ENCODE measurements at regions of chr1 and their contacts with region 1.

Region 1: GRCh38 chr1:31891280-31891679 is 46.9 kb downstream of the PTP4A2 start:
- DNase-seq: peak; percentile 81
- H3K4me3 Mint-ChIP-seq: no peak overlapping the region
- H3K27ac Mint-ChIP-seq: peak overlapping the region; percentile 90
- H3K4me1 Mint-ChIP-seq: peaks cover 38% of the 10 kb centered on the region
- H3K27me3 Mint-ChIP-seq: no peaks in the 10 kb centered on the region

Region 2: DNA sequence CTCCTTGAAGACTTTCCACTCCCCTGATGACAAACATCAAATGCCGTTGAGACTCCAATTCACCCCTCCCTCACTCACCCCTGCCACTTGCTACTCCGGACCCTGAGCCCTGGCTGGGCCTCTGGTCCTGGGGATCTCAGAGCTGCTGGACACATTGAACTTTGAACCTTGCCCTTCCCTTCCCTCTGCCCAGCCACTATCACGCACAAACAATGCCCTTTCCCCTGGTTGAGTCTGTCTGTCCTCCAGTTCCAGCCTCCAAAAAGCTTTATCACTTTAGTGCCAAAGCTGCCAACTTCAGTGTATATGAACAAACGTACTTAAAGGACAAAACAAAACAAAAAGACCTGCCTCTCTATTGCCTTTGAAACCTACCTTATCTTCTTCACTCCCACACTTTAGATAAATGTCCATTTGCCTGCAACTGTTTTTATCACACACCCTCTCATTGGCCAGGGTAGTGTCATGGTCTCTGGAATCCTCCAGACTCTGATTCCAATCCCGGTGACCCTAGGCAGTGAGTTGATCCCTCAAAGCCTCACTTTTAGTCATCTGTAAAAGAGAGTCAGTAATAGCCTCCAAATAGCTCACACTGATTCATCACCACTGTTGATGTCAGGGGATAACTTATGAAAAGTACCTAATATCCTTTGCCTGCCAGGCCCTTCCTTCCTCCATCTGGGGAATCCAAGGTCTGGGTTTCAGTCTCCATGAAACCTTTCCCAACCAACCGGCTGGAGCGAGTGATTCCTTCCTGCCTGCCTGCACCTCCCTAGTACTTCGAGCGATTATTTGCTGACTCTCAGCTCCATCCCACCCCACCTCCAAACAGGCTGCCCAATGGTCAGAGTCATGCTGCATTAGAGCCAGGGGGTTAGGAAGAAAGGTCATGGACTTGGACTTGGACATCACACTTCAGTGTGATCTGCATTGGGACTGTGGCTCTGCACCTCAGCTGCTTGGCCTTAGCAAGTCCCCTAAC is 59.6 kb before region 1 on chr1:
- CTCF ChIA-PET with region 1: no interaction called
- intact Hi-C with region 1: loop called (anchors 1 kb)
- DNase-seq: no peak
- H3K4me3 Mint-ChIP-seq: no peak overlapping the region
- H3K27ac Mint-ChIP-seq: no peak overlapping the region
- H3K4me1 Mint-ChIP-seq: peaks cover 23% of the 10 kb centered on the region
- H3K27me3 Mint-ChIP-seq: no peaks in the 10 kb centered on the region

Region 3: GRCh38 chr1:31848381-31848897 is 42.8 kb before region 1 on chr1:
- CTCF ChIA-PET with region 1: no interaction called
- intact Hi-C with region 1: loop called (anchors 2 kb)
- DNase-seq: peak; percentile 61
- H3K4me3 Mint-ChIP-seq: no peak overlapping the region
- H3K27ac Mint-ChIP-seq: no peak overlapping the region
- H3K4me1 Mint-ChIP-seq: peaks cover 57% of the 10 kb centered on the region
- H3K27me3 Mint-ChIP-seq: no peaks in the 10 kb centered on the region

Region 4: DNA sequence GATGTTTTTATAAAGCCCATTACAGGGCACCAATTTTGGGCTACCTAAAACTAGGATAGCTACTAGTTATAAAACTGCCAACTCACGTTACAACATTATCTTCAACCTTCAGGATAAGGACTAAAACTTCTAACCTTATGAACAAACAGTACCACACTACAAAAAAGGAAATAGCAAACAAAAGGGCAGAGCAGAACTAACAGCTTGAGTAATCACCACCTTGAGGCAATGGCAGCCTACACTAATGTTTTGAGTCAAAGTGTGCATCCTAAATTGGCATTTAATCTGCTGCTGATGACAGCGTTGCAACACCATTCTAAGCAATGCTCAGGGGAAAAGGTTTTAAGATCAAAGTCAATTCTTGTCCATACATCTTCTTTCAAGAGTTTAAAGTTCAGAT is 19.7 kb after region 1 on chr1:
- CTCF ChIA-PET with region 1: no interaction called
- intact Hi-C with region 1: loop called (anchors 1 kb)
- DNase-seq: peak; percentile 69
- H3K4me3 Mint-ChIP-seq: peak overlapping the region; percentile 9
- H3K27ac Mint-ChIP-seq: peak overlapping the region; percentile 74
- H3K4me1 Mint-ChIP-seq: peaks cover 58% of the 10 kb centered on the region
- H3K27me3 Mint-ChIP-seq: no peaks in the 10 kb centered on the region

Region 5: DNA sequence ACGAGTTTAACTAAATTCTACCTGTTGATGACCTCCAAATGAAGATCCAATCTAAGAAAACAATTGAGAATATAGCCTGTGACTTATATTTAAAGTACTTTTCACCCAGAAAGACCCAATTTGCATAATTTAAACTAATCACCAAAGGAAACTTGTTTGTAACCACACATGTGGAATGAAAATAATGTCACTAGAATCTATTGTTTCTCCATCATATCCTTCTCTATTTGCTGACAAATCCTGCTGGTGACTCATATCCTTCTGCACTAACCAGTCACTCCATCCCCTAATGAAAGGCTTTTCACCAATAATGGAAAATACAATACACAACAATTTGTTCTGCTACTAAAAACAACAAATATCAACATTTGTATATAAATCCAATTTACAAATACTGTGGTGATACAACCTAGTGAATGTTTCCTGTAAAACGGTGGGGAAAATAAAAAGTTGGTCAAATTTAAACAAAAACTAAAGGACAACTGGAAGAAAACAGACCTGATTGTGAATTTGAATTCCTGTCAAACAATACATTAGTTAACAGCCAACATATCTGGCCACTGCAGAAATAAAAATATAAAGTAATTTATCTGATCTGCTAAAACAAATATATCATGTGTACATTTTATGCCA is 40.4 kb after region 1 on chr1:
- CTCF ChIA-PET with region 1: interaction called, 4 read pairs
- intact Hi-C with region 1: loop called (anchors 1 kb)
- DNase-seq: no peak
- H3K4me3 Mint-ChIP-seq: peak overlapping the region; percentile 62
- H3K27ac Mint-ChIP-seq: peak overlapping the region; percentile 99
- H3K4me1 Mint-ChIP-seq: peaks cover 81% of the 10 kb centered on the region
- H3K27me3 Mint-ChIP-seq: no peaks in the 10 kb centered on the region

Measured in activated naive CD4-positive, alpha-beta T cell treated with anti-CD3 and anti-CD28 coated beads for 36 hours (primary cell).